PC-3 (cell line): ENCODE measurements at regions of chr7 and their contacts with region 1.

Region 1: DNA sequence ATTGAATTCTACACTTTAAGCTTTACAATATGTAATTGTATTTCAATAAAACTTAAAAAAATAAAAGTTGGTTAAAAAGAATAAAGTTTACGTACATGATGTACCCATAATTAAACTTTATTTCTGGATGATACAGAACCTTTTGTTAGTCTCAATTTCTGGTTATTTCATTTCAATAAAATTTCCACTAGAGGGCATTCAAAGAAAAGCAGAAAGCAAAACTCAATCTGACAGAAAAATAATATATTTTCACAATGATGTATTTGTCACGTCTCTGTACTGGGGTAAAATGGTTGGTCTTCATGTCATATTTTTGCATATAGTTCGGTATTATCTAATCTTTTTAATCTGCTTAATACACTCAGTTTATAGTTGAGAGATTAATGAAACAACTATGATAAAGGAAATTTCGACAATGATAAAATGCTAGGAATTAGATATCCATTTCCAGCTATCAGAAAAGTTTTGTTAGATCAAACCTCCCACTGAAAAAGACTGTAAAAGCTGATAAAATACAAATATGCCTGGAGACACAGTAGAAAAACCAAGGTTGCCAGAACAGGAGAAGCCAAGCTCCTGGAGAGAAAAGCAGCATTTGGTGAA is 27.4 kb downstream of the ASZ1 start:
- DNase-seq: peak; percentile 32
- ATAC-seq: no peak
- H3K4me3 ChIP-seq: no peak overlapping the region
- H3K27ac ChIP-seq: no peak overlapping the region
- H3K4me1 ChIP-seq: no peaks in the 10 kb centered on the region
- H3K27me3 ChIP-seq: peaks cover 19% of the 10 kb centered on the region
- CTCF ChIP-seq: peak; percentile 71

Region 2: GRCh38 chr7:117673839-117674238 is 273.9 kb after region 1 on chr7:
- CTCF ChIA-PET with region 1: no interaction called
- POLR2A ChIA-PET with region 1: no interaction called
- intact Hi-C with region 1: loop called (anchors 1 kb)
- DNase-seq: peak; percentile 71
- ATAC-seq: peak; percentile 75
- H3K4me3 ChIP-seq: no peak overlapping the region
- H3K27ac ChIP-seq: no peak overlapping the region
- H3K4me1 ChIP-seq: peaks cover 13% of the 10 kb centered on the region; the same call in 1 of the 2 replicates
- H3K27me3 ChIP-seq: peaks cover 34% of the 10 kb centered on the region
- CTCF ChIP-seq: peak; percentile 63

Region 3: GRCh38 chr7:117715784-117716445 is 316.0 kb after region 1 on chr7:
- CTCF ChIA-PET with region 1: no interaction called
- POLR2A ChIA-PET with region 1: no interaction called
- intact Hi-C with region 1: loop called (anchors 1 kb)
- DNase-seq: peak; percentile 72
- ATAC-seq: peak; percentile 81
- H3K4me3 ChIP-seq: no peak overlapping the region
- H3K27ac ChIP-seq: no peak overlapping the region
- H3K4me1 ChIP-seq: no peaks in the 10 kb centered on the region
- H3K27me3 ChIP-seq: 0 out of 2 replicates have a peak, but pooled peaks cover 3% of the 10 kb centered on the region
- CTCF ChIP-seq: peak; percentile 73